ENCODE measurements at regions of chr12 and their contacts with region 1.

Region 1: GRCh38 chr12:450438-450837 is 9.3 kb upstream of the B4GALNT3 start:
- DNase-seq: no peak
- ATAC-seq: no peak

Region 2: DNA sequence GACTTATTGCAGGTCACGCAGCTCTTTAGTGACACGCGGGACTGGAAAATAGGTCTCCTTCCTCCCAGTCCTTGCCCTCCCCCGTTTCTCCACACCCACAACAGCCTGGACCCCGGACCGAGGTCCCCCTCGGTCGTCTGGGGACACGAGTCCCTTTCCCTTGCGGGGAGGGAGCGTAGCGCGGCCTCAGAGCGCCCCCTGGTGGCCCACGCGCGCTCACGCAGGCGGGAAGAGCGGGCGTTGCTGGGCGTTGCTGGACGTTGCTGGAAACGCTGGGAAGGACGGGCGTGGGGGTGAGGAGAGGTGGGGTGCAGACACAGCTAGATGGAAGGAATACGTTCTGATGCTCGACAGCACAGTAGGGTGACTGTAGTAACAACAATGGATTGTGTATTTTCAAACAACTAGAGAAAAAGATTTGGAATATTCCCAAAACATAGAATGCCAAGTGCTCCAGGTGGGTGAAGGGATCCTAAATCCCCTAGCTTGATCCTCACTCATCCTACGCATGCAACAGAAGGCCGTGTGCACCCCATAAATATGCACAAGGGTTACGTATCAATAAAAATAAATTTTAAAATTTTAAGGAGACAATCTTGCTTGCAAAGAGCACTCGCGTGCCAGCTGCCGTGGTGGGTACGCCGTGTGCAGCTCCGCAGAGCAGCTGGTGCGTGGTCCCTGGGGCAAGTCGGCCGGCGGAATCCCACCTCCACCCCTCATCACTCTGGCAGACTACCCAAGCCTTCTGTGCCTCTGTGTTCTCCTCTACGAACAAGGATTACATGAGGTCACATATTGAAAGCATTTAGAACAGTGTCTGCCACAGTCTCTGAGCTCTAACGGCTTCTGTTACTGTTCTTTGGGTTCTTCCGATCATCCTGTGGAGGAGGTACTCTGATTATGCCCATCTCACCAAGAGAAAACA is 96.7 kb after region 1 on chr12:
- intact Hi-C with region 1: loop called (anchors 2 kb)
- DNase-seq: peak; percentile 78
- ATAC-seq: peak; percentile 60